ENCODE measurements at regions of chr19 and their contacts with region 1.

Region 1: DNA sequence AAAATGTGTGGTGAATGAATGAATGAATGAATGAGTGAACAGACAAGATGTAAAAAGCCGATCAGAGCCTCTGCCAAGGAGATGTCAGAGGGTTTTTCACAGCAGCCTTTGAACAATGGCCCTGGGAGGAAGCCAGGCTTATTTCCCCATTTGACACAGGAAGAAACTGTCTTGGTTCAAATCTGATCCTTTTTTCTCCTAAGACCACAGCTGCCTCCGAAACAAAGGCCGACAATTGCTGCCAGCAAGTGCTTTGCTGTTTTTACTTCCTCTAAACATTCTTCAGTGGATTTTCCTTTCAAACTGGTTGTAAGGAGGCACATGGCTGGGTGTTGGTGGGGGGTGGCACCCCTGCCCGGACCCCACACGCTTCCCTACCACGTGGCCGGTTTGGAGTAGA is 44.2 kb upstream of the HOMER3 start:
- DNase-seq: no peak

Region 2: DNA sequence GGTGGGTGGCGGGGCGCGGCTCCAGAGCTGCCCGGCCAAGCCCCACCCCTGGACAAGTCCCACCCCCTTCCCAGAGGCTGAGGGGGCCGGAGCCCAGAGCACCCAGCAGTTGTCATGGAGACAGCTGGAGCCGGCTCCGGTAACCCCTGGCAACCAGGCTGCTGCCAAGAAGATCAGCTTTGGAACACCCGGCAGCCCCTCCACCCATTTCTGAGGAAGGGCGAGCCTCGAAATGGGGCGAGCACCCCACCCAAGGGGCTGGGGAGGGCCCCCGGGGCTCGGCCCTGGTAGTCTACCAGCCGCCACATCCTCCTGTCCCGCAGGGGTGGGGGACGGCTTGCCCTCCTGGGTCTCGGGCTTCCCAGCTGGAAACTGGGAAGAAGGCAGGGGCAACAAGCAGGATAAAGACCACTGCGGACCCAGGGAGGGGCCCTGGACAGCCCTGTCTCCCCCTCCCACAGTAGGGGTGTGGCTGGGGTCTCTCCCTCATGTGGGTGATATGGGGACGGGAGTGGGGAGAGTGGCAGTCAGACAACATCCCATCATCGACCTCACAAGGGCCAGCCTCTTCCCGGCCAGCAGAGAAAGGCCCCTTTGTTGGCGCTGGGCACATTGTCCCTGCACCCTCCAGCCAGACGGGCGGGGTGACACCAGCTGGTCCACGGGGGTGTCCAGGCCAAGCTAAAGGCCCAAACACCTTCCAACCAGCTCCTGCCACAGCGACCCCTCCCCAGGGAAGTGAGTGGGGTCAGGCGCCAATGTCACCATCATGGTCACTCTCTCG is 90.8 kb before region 1 on chr19:
- CTCF ChIA-PET with region 1: interaction called, 10 read pairs
- POLR2A ChIA-PET with region 1: interaction called, 4 read pairs
- DNase-seq: no peak

Region 3: GRCh38 chr19:18995804-18996241 is 10.6 kb after region 1 on chr19:
- CTCF ChIA-PET with region 1: interaction called, 11 read pairs
- POLR2A ChIA-PET with region 1: no interaction called
- DNase-seq: peak; percentile 86

Region 4: DNA sequence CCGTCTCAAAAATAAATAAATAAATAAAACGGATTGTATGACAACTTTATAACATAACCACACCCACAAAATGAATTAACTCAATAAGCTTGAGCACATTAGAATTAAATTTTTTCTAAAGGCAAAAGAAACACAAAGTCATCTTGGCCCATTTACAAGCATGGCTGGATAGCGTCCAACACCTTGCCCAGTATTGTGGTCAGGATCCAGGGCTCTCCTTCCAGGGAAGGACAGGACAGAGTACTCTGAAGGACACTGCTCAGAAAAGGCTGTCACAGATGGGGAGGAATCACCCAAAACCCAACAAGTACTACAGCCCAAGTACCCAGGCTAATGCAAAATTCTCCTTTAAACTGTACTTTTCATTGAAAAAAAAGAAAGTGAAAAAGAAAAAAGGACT is 21.0 kb after region 1 on chr19:
- CTCF ChIA-PET with region 1: no interaction called
- POLR2A ChIA-PET with region 1: no interaction called
- DNase-seq: no peak

Region 5: DNA sequence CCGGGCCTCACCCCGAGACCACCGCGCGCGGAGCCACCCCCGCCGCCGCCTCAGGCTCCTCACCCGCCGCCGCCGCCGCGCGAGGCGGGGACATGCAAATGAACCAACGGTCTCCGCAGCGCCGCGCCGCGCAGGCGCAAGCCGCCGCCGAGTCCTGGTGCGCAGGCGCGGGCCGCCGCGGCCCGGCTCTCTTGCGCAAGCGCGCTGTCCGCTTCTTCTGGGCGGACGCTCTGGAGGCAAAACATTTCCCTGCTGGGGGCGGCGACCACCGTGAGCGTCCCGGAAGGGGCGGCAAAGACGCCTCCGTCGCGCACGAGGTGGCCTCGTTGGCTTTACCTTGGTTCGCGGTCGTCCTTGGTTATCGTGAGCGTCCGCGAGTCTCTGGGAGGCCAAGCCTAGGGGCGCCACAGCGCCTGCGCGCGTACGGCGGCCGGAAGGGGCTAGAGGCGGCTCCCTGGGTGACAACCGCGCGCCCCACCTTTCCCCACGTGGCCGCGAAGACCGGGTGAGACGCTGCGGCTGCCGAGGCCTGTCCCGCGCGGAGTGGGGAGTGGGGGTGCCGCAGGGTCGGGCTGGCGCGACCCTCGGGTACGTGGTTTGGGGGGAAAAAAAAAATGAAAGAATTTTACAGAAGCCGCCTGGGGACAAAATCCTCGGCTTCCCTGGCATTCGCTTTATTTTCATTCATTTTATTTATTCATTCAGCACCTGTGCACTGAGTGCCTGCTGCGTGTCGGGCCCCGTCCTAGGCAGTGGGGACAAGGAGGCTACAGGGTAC is 48.4 kb after region 1 on chr19 and contains the starts of genes ARMC6 and SUGP2:
- CTCF ChIA-PET with region 1: no interaction called
- POLR2A ChIA-PET with region 1: no interaction called
- DNase-seq: peak; percentile 99